ENCODE measurements at regions of chr20 and their contacts with region 1.

Region 1: DNA sequence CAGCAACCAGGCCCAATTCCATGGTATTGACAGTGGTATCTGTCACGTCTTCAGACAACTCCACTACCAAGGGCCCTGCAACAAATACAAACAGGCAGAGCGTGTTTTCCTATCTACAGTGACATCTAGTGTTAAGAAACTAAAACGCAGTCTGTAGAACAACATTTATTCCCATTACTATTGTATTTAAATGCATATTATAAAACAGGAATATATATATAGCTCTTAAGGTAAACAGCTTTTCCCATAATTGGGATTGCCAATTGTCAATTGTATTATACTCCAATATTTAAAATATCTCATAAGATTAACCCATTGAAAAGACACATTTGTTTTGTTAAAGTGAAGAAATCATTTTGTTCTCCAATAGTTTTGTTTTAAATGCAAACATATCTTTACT is 97.2 kb downstream of the KIF16B start:
- DNase-seq: peak; percentile 43 to 53
- H3K4me3 ChIP-seq: no peak overlapping the region
- H3K4me3 Mint-ChIP-seq: peak overlapping the region; percentile 12
- H3K27ac Mint-ChIP-seq: no peak overlapping the region
- H3K4me1 ChIP-seq: peaks cover 76% of the 10 kb centered on the region
- H3K4me1 Mint-ChIP-seq: peaks cover 40% of the 10 kb centered on the region
- H3K27me3 ChIP-seq: no peaks in the 10 kb centered on the region
- H3K27me3 Mint-ChIP-seq: no peaks in the 10 kb centered on the region
- CTCF ChIP-seq: peak; percentile 58 to 76

Region 2: GRCh38 chr20:15867901-15868300 is 608.1 kb before region 1 on chr20:
- CTCF ChIA-PET with region 1: no interaction called
- POLR2A ChIA-PET with region 1: no interaction called
- intact Hi-C with region 1: loop called (anchors 10 kb)
- DNase-seq: peak in 1 of 2 experiments; percentile 17
- H3K4me3 ChIP-seq: no peak overlapping the region
- H3K4me3 Mint-ChIP-seq: no peak overlapping the region
- H3K27ac Mint-ChIP-seq: no peak overlapping the region
- H3K4me1 ChIP-seq: no peaks in the 10 kb centered on the region
- H3K4me1 Mint-ChIP-seq: no peaks in the 10 kb centered on the region
- H3K27me3 ChIP-seq: no peaks in the 10 kb centered on the region
- H3K27me3 Mint-ChIP-seq: no peaks in the 10 kb centered on the region
- CTCF ChIP-seq: peak in 1 of 2 experiments; percentile 53

Region 3: GRCh38 chr20:16279320-16279719 is 196.7 kb before region 1 on chr20:
- CTCF ChIA-PET with region 1: interaction called, 7 read pairs
- POLR2A ChIA-PET with region 1: no interaction called
- intact Hi-C with region 1: loop called (anchors 1 kb)
- DNase-seq: peak in 1 of 2 experiments; percentile 41
- H3K4me3 ChIP-seq: no peak overlapping the region
- H3K4me3 Mint-ChIP-seq: no peak overlapping the region
- H3K27ac Mint-ChIP-seq: no peak overlapping the region
- H3K4me1 ChIP-seq: peaks cover 11% of the 10 kb centered on the region
- H3K4me1 Mint-ChIP-seq: no peaks in the 10 kb centered on the region
- H3K27me3 ChIP-seq: no peaks in the 10 kb centered on the region
- H3K27me3 Mint-ChIP-seq: no peaks in the 10 kb centered on the region
- CTCF ChIP-seq: peak in 1 of 2 experiments; percentile 33

Region 4: DNA sequence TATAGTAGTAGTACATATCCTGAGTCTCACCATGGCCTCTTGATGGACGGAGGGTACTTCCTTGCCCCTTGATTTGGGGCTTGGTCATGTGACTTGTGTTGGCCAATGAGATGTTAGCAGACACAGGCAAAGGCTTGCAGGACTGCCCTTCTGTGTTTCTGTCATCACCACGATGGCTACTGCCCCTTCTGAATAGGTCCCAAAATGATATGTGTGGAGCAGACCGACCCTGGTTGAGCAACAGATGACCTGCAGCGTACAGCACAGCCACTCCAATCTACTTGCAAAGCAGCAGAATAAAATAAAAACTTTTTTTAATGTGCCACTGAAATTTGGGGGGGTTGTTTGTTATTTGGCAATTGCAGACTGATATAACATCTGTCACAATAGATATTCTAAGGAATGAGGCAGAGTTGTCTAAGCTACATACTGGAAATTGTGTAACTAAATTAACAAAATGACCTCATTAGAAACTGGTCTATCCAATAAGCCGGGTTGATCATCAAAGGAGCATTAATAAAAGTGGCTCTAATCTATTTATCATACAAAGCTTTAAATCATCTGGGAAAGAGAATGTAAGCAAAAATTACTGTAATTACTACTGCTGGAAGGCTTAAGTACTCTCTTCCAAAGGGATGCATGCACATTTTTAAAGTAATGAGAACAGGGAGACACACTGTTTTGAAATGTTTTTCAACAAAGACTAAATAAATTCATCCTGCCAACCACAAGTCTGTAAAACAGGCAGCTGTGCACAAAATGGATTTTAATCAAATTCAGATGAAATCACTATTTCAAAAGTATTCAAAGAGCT is 112.3 kb before region 1 on chr20:
- CTCF ChIA-PET with region 1: interaction called, 3 read pairs
- POLR2A ChIA-PET with region 1: no interaction called
- intact Hi-C with region 1: loop called (anchors 1 kb)
- DNase-seq: no peak
- H3K4me3 ChIP-seq: no peak overlapping the region
- H3K4me3 Mint-ChIP-seq: no peak overlapping the region
- H3K27ac Mint-ChIP-seq: no peak overlapping the region
- H3K4me1 ChIP-seq: peaks cover 10% of the 10 kb centered on the region
- H3K4me1 Mint-ChIP-seq: peaks cover 5% of the 10 kb centered on the region
- H3K27me3 ChIP-seq: no peaks in the 10 kb centered on the region
- H3K27me3 Mint-ChIP-seq: no peaks in the 10 kb centered on the region
- CTCF ChIP-seq: no peak

Region 5: DNA sequence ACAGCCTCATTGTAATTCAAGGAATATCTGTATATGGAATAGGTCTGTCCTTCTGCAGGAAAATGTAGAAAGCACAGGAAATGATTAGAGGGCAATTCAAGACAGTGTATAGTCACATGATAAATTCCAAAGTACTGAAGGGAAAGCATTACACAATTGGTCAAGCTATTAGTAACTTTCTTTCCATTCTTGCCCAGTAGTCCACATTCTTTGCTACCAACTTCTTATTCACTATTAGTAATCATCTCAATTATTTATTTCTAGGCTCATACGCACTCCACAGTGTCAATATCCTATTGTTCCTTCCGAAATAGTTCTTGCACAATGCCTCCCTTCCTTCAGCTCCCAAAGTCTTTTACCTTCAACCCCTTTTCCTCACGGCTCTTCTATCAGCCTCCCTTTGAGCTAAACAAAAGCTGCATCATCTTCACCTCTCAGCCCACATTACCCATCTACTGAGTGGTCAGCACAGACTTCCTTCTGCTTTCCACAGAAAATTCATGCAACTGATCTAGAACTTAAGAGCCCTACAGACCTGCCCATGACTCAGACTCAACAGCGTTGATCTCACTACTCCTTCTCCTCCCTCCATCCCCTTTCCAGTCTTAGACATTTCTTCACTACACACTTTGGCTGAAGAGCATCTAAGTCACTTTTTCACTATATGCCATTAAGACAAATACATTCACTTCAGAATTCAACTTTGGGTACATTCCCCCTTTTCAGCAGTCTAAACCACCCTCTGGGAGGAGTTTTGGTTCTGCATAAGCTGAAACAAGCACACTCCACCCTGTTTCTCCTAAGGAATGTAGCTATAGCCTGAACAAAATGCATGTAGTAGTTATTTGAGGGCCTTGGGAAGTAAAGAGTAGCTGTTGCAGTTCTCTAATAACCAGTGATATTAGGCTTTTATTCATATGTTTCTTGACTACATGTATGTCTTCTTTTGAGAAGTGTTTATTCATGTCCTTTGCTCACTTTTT is 60.7 kb before region 1 on chr20:
- CTCF ChIA-PET with region 1: no interaction called
- POLR2A ChIA-PET with region 1: interaction called, 3 read pairs
- intact Hi-C with region 1: loop called (anchors 2 kb)
- DNase-seq: no peak
- H3K4me3 ChIP-seq: no peak overlapping the region
- H3K4me3 Mint-ChIP-seq: no peak overlapping the region
- H3K27ac Mint-ChIP-seq: peak overlapping the region; percentile 20
- H3K4me1 ChIP-seq: peaks cover 49% of the 10 kb centered on the region
- H3K4me1 Mint-ChIP-seq: peaks cover 26% of the 10 kb centered on the region
- H3K27me3 ChIP-seq: no peaks in the 10 kb centered on the region
- H3K27me3 Mint-ChIP-seq: no peaks in the 10 kb centered on the region
- CTCF ChIP-seq: no peak